Activated B cell treated with CpG ODN at 0.5 μM for 24 hours (primary cell): ENCODE measurements at regions of chr1 and their contacts with region 1.

Region 1: DNA sequence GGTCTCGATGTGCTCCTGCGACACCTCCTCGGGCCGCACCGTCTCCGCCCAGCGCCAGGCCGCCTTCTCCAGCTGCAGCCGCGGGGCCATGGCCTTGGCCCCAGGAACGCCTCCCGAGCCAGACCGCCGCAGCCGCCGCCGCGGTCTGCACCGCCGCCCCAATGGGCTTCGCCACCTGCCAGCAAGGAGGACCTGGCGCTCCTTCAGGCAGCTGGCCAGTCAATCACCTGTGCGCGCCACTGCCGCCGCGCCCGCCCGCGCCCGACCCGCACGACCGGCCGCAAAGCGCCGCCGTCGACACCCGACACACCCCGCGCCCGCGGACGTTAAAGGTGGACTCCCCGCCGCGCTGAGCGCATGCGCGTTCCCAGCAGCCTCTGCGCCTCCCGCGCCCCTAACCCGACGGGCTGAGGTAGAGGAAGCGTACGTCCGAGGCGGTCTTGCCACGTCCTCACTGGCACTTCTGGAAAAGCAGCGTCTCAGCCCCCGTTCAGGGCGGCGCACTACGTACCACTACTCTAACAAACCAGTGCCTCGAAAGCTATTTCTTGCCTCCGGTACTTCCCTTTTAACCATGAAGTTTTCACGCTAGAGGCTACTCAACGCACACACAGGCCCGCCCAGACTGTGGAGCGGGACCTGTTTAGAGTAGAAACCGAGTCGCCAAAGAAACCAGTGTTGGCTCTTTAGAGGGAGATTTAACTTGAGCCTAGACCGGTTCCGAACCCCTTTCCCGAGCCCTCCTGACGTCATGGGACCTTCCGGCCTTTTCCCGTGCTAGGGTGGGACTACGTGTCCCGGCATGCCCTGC is at the start of gene USP48:
- DNase-seq: peak; percentile 97
- ATAC-seq: peak; percentile 78
- H3K4me3 Mint-ChIP-seq: peak within 1 kb of the TSS; percentile 90
- H3K27ac Mint-ChIP-seq: peak within 1 kb of the TSS; percentile 100
- H3K4me1 Mint-ChIP-seq: peaks cover 30% of the 10 kb centered on the region
- H3K27me3 Mint-ChIP-seq: no peaks in the 10 kb centered on the region
- CTCF ChIP-seq: no peak
- total RNA-seq, gene USP48: 86.3 and 97.3 TPM in 2 replicates

Region 2: GRCh38 chr1:21517161-21517589 is 265.9 kb before region 1 on chr1:
- CTCF ChIA-PET with region 1: no interaction called
- POLR2A ChIA-PET with region 1: interaction called, 9 read pairs
- intact Hi-C with region 1: loop called (anchors 5 kb)
- DNase-seq: no peak
- ATAC-seq: peak; percentile 6
- H3K4me3 Mint-ChIP-seq: peak overlapping the region; percentile 39
- H3K27ac Mint-ChIP-seq: peak overlapping the region; percentile 96
- H3K4me1 Mint-ChIP-seq: peaks cover 82% of the 10 kb centered on the region
- H3K27me3 Mint-ChIP-seq: no peaks in the 10 kb centered on the region
- CTCF ChIP-seq: no peak

Region 3: GRCh38 chr1:21749109-21749508 is 34.0 kb before region 1 on chr1:
- CTCF ChIA-PET with region 1: interaction called, 3 read pairs
- POLR2A ChIA-PET with region 1: interaction called, 3 read pairs
- intact Hi-C with region 1: loop called (anchors 5 kb)
- DNase-seq: no peak
- ATAC-seq: no peak
- H3K4me3 Mint-ChIP-seq: no peak overlapping the region
- H3K27ac Mint-ChIP-seq: no peak overlapping the region
- H3K4me1 Mint-ChIP-seq: no peaks in the 10 kb centered on the region
- H3K27me3 Mint-ChIP-seq: no peaks in the 10 kb centered on the region
- CTCF ChIP-seq: no peak

Region 4: DNA sequence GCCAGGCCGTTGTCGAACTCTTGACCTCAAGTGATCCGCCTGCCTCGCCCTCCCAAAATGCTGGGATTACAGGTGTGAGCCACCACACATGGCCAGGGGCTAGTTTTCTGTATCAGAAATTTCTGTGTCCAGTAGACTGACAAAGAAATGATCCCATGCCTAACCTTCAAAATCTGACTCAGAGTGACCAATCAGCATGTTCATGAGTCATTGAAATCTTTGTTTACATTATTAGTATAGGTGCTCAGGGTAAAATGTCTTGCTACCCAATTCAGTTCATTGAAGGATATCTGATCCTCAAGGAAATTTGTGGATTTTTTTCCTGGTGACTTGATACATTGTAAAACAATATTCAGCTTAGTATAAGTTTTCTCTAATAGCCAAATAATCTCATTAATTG is 18.0 kb after region 1 on chr1:
- CTCF ChIA-PET with region 1: no interaction called
- POLR2A ChIA-PET with region 1: no interaction called
- intact Hi-C with region 1: no loop called
- DNase-seq: no peak
- ATAC-seq: no peak
- H3K4me3 Mint-ChIP-seq: no peak overlapping the region
- H3K27ac Mint-ChIP-seq: no peak overlapping the region
- H3K4me1 Mint-ChIP-seq: peaks cover 13% of the 10 kb centered on the region
- H3K27me3 Mint-ChIP-seq: no peaks in the 10 kb centered on the region
- CTCF ChIP-seq: no peak

Region 5: DNA sequence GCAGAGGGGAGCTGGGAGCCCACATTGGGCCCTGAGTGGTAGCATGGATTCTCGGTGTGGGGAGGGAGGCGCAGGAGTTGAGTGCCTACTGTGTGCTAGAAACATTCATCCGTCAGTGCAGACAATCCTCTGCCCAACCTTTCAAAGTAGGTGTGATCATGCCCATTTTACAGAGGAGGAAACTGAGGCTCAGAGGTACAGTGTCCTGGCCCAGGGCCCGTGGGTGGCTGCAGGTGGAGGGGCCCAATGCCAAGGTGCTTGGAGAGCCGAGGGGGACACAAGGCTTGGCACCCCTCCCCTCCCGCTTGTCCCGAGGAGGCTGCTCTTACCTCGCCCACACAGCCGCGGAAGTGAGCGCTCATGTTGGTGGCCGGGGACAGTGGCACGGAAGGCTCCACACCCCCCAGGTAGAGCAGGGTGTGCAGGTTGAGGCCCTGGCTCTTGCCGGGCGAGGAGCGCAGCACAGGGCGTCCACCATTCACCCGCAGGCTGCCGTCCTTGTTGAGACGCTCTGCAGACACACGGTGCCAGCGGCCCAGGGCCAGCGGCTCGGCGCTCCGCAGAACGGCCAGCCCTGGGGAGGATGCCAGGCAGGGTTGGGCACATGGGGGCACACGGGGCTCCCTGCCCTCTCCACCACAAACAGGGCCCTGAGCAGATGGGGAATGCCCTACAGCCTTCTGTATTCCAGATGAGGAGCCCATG is 45.6 kb after region 1 on chr1:
- CTCF ChIA-PET with region 1: no interaction called
- POLR2A ChIA-PET with region 1: no interaction called
- intact Hi-C with region 1: no loop called
- DNase-seq: no peak
- ATAC-seq: no peak
- H3K4me3 Mint-ChIP-seq: no peak overlapping the region
- H3K27ac Mint-ChIP-seq: no peak overlapping the region
- H3K4me1 Mint-ChIP-seq: no peaks in the 10 kb centered on the region
- H3K27me3 Mint-ChIP-seq: no peaks in the 10 kb centered on the region
- CTCF ChIP-seq: no peak

Region 6: DNA sequence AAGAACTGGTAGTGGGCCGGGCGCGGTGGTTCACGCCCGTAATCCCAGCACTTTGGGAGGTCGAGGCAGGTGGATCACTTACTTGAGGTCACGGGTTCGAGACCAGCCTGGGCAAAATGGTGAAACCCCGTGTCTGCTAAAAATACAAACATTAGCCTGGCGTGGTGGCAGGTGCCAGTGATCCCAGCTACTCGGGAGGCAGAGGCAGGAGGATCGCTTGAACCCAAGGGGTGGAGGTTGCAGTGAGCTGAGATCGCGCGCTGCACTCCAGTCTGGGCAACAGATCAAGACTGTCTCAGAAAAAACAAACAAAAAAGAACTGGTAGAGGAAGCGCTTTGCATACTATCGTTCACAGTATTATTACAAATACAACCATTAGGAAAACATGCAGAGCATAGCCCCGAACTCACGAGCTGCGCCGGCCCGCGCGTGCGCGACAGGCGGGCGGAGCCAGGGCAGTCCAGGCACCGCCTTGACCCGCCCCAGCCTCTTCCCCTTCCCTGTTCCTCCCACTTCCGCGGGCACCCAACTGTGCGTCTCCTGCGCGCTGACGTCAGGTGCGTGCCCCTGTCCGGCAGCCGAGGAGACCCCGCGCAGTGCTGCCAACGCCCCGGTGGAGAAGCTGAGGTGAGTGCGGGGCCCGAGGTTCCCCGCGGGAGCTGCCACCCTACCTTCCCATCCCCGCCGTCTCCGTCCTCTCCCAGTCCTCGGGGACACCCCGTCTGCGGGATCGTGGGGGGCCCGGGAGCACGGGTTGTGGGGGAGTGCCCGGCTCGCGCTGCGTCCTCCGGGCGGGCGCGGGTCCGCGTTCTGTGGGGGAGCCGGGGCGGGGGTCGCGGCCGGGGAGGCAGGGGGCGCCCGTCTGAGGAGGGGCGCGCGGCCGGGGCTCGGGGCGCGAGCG is 269.3 kb after region 1 on chr1 and contains the start of gene CDC42:
- CTCF ChIA-PET with region 1: no interaction called
- POLR2A ChIA-PET with region 1: interaction called, 16 read pairs
- intact Hi-C with region 1: loop called (anchors 2 kb)
- DNase-seq: peak; percentile 98
- ATAC-seq: peak; percentile 87
- H3K4me3 Mint-ChIP-seq: peak within 1 kb of the TSS; percentile 95
- H3K27ac Mint-ChIP-seq: peak within 1 kb of the TSS; percentile 91
- H3K4me1 Mint-ChIP-seq: peaks cover 58% of the 10 kb centered on the region
- H3K27me3 Mint-ChIP-seq: no peaks in the 10 kb centered on the region
- CTCF ChIP-seq: no peak
- total RNA-seq, gene CDC42: 310 and 324 TPM in 2 replicates

Region 7: DNA sequence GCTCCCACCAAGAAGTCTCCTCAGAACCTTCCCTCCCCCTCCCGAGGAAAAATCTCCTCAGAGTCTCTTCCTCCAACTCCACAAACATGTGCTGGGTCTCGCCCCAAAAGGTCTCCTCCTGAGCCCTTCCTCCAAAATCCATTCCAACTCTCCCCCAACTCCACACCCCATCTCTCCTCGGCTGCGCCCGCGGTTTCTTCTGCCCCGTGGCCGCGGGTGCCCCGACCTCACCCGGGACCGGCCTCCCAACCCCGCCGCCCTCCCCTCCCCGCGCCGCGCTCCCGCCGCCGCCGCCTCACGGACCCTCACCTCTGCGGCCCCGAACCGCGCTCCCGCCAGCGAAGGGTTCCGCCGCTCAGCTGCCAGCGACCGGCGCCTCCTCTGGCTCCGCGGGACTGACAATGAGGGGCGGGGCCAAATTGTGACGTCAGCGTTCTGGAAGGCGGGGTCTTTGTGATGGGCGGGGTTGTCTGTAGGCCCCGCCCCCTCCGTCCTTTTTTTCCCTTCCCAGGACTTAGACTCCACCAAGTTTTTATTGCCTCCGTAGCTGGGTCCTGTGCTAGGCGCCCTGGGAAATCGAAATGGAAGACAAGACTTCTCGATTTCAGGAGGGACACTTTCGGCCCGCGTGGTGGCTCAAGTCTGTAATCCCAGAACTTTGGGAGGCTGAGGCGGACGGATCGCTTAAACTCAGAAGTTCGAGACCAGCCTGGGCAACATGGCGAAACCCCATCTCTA is 1385.6 kb after region 1 on chr1 and contains the start of gene LUZP1:
- CTCF ChIA-PET with region 1: no interaction called
- POLR2A ChIA-PET with region 1: no interaction called
- intact Hi-C with region 1: loop called (anchors 5 kb)
- DNase-seq: peak; percentile 80
- ATAC-seq: peak; percentile 84
- H3K4me3 Mint-ChIP-seq: peak within 1 kb of the TSS; percentile 95
- H3K27ac Mint-ChIP-seq: peak within 1 kb of the TSS; percentile 80
- H3K4me1 Mint-ChIP-seq: peaks cover 23% of the 10 kb centered on the region
- H3K27me3 Mint-ChIP-seq: no peaks in the 10 kb centered on the region
- CTCF ChIP-seq: no peak
- total RNA-seq, gene LUZP1: 10.8 and 13.0 TPM in 2 replicates